Activated CD4-positive, alpha-beta T cell treated with anti-CD3 and anti-CD28 coated beads for 36 hours (primary cell): ENCODE measurements at regions of chr11 and their contacts with region 1.

Region 1: DNA sequence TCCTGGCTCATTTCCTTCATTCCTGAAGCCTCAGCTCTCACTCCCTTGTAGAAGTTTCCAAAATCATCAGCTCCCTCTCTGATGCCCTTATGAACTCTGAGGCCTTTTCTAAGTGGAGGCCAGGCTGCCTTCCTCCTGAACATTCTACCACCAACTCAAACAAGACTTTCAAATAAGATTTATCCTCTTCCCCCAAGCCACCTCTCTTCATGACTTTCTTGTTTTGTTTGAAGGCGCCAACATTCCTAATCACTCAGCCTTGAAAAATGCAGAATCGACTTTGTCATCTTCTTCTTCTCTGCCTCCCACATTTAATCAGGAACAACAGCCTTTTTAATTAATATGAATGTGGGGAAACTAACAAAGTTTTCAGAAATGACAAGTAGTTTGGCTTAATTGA is 927.9 kb downstream of the OPCML start:
- DNase-seq: no peak
- ATAC-seq: no peak
- H3K4me3 Mint-ChIP-seq: no peak overlapping the region
- H3K27ac Mint-ChIP-seq: no peak overlapping the region
- H3K4me1 Mint-ChIP-seq: no peaks in the 10 kb centered on the region
- H3K27me3 Mint-ChIP-seq: no peaks in the 10 kb centered on the region

Region 2: GRCh38 chr11:132620423-132620822 is 16.0 kb after region 1 on chr11:
- CTCF ChIA-PET with region 1: no interaction called
- POLR2A ChIA-PET with region 1: no interaction called
- intact Hi-C with region 1: no loop called
- DNase-seq: no peak
- ATAC-seq: no peak
- H3K4me3 Mint-ChIP-seq: no peak overlapping the region
- H3K27ac Mint-ChIP-seq: no peak overlapping the region
- H3K4me1 Mint-ChIP-seq: no peaks in the 10 kb centered on the region
- H3K27me3 Mint-ChIP-seq: no peaks in the 10 kb centered on the region

Region 3: GRCh38 chr11:132648851-132649250 is 44.4 kb after region 1 on chr11:
- CTCF ChIA-PET with region 1: no interaction called
- POLR2A ChIA-PET with region 1: no interaction called
- intact Hi-C with region 1: loop called in 1 of 2 experiments (anchors 1 kb)
- DNase-seq: no peak
- ATAC-seq: no peak
- H3K4me3 Mint-ChIP-seq: no peak overlapping the region
- H3K27ac Mint-ChIP-seq: no peak overlapping the region
- H3K4me1 Mint-ChIP-seq: no peaks in the 10 kb centered on the region
- H3K27me3 Mint-ChIP-seq: no peaks in the 10 kb centered on the region

Region 4: GRCh38 chr11:132671851-132672370 is 67.5 kb after region 1 on chr11:
- CTCF ChIA-PET with region 1: no interaction called
- POLR2A ChIA-PET with region 1: no interaction called
- intact Hi-C with region 1: no loop called
- DNase-seq: no peak
- ATAC-seq: no peak
- H3K4me3 Mint-ChIP-seq: no peak overlapping the region
- H3K27ac Mint-ChIP-seq: no peak overlapping the region
- H3K4me1 Mint-ChIP-seq: no peaks in the 10 kb centered on the region
- H3K27me3 Mint-ChIP-seq: no peaks in the 10 kb centered on the region